ENCODE measurements at regions of chr2 and their contacts with region 1.

Region 1: DNA sequence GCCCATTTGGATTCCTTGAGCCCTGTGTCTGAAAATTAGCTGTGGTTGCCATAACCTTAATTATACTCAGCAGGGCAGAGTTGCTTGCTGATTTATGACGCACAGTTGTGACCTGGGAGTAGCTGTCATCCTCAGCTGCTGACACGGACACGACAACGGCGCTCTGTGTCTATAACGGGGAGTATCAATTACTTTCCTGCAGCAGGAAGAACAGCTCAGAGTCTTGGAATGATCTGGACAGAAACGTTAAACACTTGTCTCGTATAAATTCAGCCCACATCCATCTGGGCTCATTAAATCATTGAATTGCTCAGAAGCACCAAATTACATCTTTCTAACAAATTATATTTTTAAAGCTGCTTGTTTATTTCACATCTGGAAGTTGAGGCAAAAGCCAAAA is 116.3 kb downstream of the SEPTIN10 start:
- DNase-seq: no peak
- ATAC-seq: peak in 2 of 4 donors; percentile 30 to 54
- H3K4me3 ChIP-seq: no peak overlapping the region
- H3K27ac ChIP-seq: peak overlapping the region in 1 of 12 donors; percentile 28
- H3K4me1 ChIP-seq: peaks cover 0 to 24% (median 12%) of the 10 kb centered on the region in 12 donors
- H3K27me3 ChIP-seq: no peaks in the 10 kb centered on the region
- CTCF ChIP-seq: no peak
- POLR2A ChIP-seq: no peak

Region 2: DNA sequence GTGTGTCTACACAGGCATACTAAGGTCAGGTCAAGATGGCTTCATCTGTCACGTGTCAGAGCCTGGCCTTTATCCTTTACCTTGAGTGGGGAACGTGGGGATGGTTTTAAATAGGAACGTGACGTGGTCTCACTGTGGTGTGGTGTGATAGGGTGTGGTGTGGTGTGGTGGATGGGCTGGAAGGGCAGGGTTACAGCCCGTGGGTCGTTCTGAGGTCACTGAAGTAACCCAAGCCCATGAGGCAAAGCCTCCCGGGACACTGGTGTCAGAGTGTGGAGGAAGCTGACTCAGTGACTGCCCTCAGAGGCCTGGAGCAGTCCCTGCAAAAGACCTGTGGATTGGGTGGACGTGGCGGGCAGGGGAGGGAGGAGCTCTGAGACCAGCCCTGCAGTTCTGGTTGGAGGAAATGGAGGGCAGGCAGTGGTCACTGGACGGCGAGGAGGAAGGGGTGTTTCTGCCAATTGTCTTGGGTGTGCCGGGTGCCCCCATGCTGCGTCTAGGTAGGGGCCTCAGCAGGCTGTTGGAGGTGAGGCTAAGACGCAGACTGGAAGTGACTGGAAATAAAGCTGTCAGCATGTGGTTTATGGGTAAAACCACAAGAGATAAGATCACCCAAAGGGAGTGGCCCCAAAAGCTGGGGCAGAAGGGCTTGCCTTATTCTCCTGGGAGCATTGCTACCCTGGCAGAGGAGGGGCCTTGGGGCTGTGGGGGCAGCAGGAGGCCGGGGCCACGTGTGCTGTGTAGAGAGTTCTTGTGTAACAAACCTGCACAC is 283.6 kb before region 1 on chr2:
- intact Hi-C with region 1: no loop called
- DNase-seq: peak in 1 of 5 donors; percentile 75
- ATAC-seq: peak; percentile 16 to 71 (median 60)
- H3K4me3 ChIP-seq: no peak overlapping the region
- H3K27ac ChIP-seq: peak overlapping the region in 1 of 12 donors; percentile 42
- H3K4me1 ChIP-seq: peaks cover 0 to 100% (median 45%) of the 10 kb centered on the region in 12 donors
- H3K27me3 ChIP-seq: no peaks in the 10 kb centered on the region
- CTCF ChIP-seq: no peak
- POLR2A ChIP-seq: no peak

Region 3: GRCh38 chr2:109275120-109276012 is 222.1 kb before region 1 on chr2:
- intact Hi-C with region 1: loop called in 4 of 10 experiments (anchors 5 to 10 kb)
- DNase-seq: peak in 1 of 5 donors; percentile 36
- ATAC-seq: peak in 2 of 4 donors; percentile 10 to 47
- H3K4me3 ChIP-seq: no peak overlapping the region
- H3K27ac ChIP-seq: no peak overlapping the region
- H3K4me1 ChIP-seq: peaks cover 0 to 22% (median 12%) of the 10 kb centered on the region in 12 donors
- H3K27me3 ChIP-seq: no peaks in the 10 kb centered on the region
- CTCF ChIP-seq: no peak
- POLR2A ChIP-seq: no peak

Region 4: GRCh38 chr2:109448946-109449788 is 48.3 kb before region 1 on chr2:
- intact Hi-C with region 1: loop called in 3 of 10 experiments (anchors 5 to 10 kb)
- DNase-seq: peak; percentile 55 to 87 (median 70)
- ATAC-seq: peak; percentile 87 to 96 (median 90)
- H3K4me3 ChIP-seq: no peak overlapping the region
- H3K27ac ChIP-seq: peak overlapping the region in 8 of 12 donors; percentile 20 to 64 (median 38)
- H3K4me1 ChIP-seq: peaks cover 0 to 22% (median 12%) of the 10 kb centered on the region in 12 donors
- H3K27me3 ChIP-seq: no peaks in the 10 kb centered on the region
- CTCF ChIP-seq: peak in 3 of 12 donors; percentile 11 to 33 (median 18)
- POLR2A ChIP-seq: no peak

Measured in heart left ventricle (tissue), 16 donors.